PC-9 (cell line): ENCODE measurements at regions of chr1 and their contacts with region 1.

Region 1: DNA sequence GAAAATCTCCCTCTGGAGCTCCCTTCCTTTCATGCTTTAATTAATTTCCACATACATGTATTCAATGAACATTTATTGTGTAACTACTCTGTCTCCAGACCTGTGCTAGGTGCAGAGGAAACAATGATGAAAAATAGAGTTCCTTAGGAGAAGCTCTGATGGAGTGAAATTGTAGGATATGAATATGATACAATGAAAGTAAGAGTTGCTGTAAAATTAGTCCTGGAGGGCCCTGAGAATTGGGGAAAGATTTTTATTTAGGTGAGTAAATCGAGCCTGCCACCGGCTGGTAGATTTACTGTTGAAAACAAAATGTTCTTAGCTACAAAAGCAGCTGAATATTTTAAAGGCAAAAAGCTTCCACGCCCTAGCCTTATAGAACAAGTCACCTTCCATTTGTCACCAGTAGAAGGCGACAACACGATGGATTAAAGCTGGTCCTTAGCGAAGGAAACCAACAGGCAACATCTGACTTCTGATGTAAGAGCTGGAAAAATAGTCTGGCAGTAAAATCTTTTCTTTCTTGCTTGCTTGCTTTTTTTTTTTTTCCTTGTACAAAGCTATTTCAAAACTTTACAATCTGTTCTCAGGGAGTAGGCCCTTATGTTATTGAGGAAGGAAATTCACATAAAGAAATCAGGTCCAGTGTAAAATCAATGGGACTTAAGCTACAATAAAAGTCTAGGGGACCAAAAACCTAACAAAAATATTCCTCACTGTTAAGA is 82.0 kb upstream of the ROR1 start:
- DNase-seq: peak; percentile 62 to 86
- H3K4me3 ChIP-seq: no peak overlapping the region
- H3K27ac ChIP-seq: peak overlapping the region; percentile 61
- H3K4me1 ChIP-seq: peaks cover 11% of the 10 kb centered on the region
- H3K27me3 ChIP-seq: no peaks in the 10 kb centered on the region
- CTCF ChIP-seq: peak; percentile 88

Region 2: DNA sequence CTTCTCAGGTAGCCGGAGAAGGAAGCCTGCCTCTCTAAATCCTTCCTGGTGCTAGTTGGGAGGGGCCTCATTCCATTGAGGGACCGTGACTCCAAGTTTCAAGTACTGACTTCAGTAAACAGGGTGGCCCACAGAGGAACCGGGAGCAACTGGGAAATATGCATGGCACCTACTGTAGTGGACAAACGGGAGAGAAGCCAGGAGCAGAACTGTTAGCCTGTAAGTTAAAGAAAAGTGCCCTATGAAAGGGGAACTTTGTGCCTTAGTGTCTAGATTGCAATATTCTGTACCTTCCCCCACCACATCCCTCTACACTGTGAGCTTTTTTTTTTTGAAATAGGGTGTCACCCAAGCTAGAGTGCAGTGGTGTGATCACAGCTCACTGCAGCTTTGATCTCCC is 1339.5 kb before region 1 on chr1:
- CTCF ChIA-PET with region 1: interaction called, 14 read pairs
- POLR2A ChIA-PET with region 1: no interaction called
- intact Hi-C with region 1: no loop called
- DNase-seq: no peak
- H3K4me3 ChIP-seq: no peak overlapping the region
- H3K27ac ChIP-seq: no peak overlapping the region
- H3K4me1 ChIP-seq: peaks cover 6% of the 10 kb centered on the region; the same call in 1 of the 2 replicates
- H3K27me3 ChIP-seq: no peaks in the 10 kb centered on the region
- CTCF ChIP-seq: no peak

Region 3: GRCh38 chr1:63615768-63616420 is 76.0 kb before region 1 on chr1:
- CTCF ChIA-PET with region 1: interaction called, 6 read pairs
- POLR2A ChIA-PET with region 1: no interaction called
- intact Hi-C with region 1: loop called (anchors 5 kb)
- DNase-seq: peak; percentile 61 to 63
- H3K4me3 ChIP-seq: no peak overlapping the region
- H3K27ac ChIP-seq: no peak overlapping the region
- H3K4me1 ChIP-seq: peaks cover 38% of the 10 kb centered on the region
- H3K27me3 ChIP-seq: no peaks in the 10 kb centered on the region
- CTCF ChIP-seq: peak; percentile 91

Region 4: GRCh38 chr1:63674238-63674864 is 17.5 kb before region 1 on chr1:
- CTCF ChIA-PET with region 1: interaction called, 13 read pairs
- POLR2A ChIA-PET with region 1: interaction called, 5 read pairs
- intact Hi-C with region 1: no loop called
- DNase-seq: peak; percentile 83 to 95
- H3K4me3 ChIP-seq: no peak overlapping the region
- H3K27ac ChIP-seq: peak overlapping the region; percentile 41; the same call in 1 of the 2 replicates
- H3K4me1 ChIP-seq: peaks cover 13% of the 10 kb centered on the region
- H3K27me3 ChIP-seq: no peaks in the 10 kb centered on the region
- CTCF ChIP-seq: peak; percentile 82

Region 5: GRCh38 chr1:63731117-63732043 is 39.5 kb after region 1 on chr1:
- CTCF ChIA-PET with region 1: interaction called, 11 read pairs
- POLR2A ChIA-PET with region 1: no interaction called
- intact Hi-C with region 1: no loop called
- DNase-seq: peak; percentile 63 to 95
- H3K4me3 ChIP-seq: peak overlapping the region; percentile 23; the same call in 1 of the 2 replicates
- H3K27ac ChIP-seq: peak overlapping the region; percentile 67
- H3K4me1 ChIP-seq: peaks cover 25% of the 10 kb centered on the region
- H3K27me3 ChIP-seq: no peaks in the 10 kb centered on the region
- CTCF ChIP-seq: no peak

Region 6: DNA sequence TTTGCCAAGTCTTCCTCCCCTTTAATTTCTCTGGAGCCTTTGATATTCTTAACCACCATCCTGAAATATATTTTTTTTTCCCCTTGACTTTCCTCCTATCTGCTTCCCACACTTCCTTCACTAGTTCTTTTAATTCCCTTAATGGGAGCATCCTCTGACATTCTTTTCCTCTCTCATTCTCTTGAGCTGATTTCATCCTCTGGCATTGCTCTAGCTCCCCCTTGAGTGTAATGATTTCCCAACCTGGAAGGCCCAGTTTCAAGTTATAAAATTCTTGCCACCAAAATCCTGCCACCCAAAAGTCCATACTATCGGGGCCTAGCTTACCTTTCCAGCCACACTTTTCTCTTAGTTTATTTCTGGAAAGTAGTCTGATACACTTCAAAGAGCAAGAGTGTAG is 472.1 kb after region 1 on chr1:
- CTCF ChIA-PET with region 1: interaction called, 6 read pairs
- POLR2A ChIA-PET with region 1: no interaction called
- intact Hi-C with region 1: loop called (anchors 5 kb)
- DNase-seq: no peak
- H3K4me3 ChIP-seq: no peak overlapping the region
- H3K27ac ChIP-seq: no peak overlapping the region
- H3K4me1 ChIP-seq: no peaks in the 10 kb centered on the region
- H3K27me3 ChIP-seq: no peaks in the 10 kb centered on the region
- CTCF ChIP-seq: peak; percentile 45; the same call in 1 of the 2 replicates

Region 7: DNA sequence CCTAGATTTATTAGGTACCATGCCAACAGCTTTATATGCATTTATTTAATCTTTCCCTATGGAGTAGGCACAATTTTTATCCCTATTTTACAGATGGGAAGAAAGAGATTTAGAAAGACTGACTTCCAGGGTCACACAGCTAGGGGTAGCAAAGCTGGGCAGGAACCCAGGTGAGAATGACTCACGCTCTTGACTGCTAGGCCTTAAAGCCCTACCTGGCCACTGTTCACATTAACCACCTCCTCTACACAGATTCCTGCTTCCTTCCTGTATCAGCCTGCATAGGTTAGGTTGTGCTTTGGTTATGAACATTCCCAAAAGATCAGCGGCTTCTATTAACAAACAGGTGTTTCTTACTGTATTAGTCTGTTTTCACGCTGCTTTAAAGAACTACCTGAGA is 1670.7 kb after region 1 on chr1:
- CTCF ChIA-PET with region 1: no interaction called
- POLR2A ChIA-PET with region 1: no interaction called
- intact Hi-C with region 1: no loop called
- DNase-seq: peak in 1 of 2 experiments; percentile 19
- H3K4me3 ChIP-seq: no peak overlapping the region
- H3K27ac ChIP-seq: no peak overlapping the region
- H3K4me1 ChIP-seq: peaks cover 7% of the 10 kb centered on the region; the same call in 1 of the 2 replicates
- H3K27me3 ChIP-seq: no peaks in the 10 kb centered on the region
- CTCF ChIP-seq: no peak